BJ (cell line): ENCODE measurements at regions of chr1 and their contacts with region 1.

Region 1: DNA sequence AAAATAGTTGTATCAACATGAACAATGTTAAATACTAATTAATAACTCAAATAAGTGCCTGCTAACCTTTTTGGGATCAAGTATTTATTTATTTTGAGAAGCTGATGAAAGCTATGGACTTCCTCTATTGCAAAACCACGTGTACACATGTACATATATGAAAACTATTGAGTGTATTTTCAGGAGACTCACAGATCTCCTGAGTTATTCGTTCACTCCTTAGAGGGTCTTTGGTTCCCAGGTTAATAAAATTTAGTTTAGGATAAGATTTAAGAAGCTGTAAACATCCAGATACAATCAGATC is 130.5 kb downstream of the DISC1 start:
- DNase-seq: no peak
- H3K4me3 ChIP-seq: no peak overlapping the region
- H3K27me3 ChIP-seq: no peaks in the 10 kb centered on the region
- CTCF ChIP-seq: no peak

Region 2: DNA sequence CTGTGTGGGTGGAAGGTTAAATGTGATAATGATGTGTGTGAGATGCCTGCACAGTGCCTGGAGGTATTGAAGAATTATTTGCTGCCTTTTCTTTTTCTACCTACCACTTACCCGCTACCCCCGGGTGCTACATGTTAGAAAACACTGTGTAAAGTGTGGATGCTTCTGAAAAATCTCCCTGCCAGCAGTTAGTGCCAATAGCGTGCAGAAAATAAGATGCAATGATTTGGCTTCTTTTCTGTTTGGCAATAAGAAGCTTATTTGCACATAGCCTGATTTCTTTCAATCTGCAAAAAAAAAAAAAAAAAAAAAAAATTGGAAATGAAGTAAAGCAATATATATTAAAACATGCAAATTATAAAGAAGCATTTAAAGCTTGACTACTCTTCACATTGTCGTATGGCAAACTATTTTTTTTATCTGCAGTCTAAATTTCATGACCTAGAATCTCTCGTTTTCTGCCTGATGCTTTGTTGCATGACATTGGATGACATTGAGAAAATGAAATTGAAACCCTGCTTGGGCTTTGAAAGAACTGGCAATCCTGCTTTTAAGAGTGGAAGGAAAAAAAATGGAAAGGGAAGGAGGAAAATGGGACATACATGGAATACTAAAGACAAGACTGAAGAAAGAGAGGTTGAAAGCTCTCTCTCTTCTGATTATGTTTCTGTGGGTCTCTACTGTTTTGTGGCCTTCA is 40.9 kb before region 1 on chr1:
- CTCF ChIA-PET with region 1: no interaction called
- POLR2A ChIA-PET with region 1: no interaction called
- DNase-seq: no peak
- H3K4me3 ChIP-seq: no peak overlapping the region
- H3K27me3 ChIP-seq: no peaks in the 10 kb centered on the region
- CTCF ChIP-seq: no peak

Region 3: DNA sequence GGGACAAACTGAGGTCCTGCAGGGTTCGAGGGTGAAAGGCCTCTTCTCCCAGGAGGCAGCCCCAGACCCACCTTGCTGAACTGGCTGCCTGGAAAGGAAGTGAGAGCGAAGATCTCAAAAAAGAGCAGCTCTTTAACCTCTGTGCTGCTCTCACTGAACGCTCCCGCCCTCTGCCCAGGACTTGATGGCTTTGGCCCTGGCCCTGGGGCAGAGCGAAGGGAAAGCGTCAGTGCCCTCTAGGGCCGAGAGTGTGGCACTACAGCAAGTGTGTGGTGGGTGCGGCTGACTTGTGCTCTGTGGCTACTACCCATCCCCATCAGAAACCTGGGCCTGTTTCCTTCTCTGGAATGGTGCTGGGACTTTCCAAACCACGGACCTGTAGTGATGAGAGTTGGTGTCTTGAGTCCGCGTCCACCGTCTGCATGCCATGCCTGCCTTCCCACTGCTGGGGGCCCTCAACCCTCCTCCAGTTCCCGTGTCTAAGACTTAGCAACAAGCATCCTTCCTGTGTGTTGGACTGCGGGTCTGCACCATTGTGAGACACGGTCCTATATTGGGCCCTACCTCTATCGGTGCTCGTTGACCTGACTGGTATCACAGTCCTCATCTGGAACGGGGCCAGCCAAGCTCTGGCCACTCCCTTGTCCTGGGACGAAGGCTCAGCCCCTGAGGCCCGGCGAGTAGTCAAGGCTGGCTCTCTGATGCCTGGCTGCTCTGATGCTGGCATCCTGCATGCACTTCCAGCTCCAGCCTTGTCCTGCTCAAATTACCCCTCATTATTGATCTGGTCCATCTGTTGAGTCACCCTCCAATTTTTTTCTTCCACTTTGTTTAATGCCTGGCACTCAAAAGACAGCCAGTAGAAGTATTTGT is 49.8 kb after region 1 on chr1:
- CTCF ChIA-PET with region 1: interaction called, 21 read pairs
- POLR2A ChIA-PET with region 1: no interaction called
- DNase-seq: no peak
- H3K4me3 ChIP-seq: no peak overlapping the region
- H3K27me3 ChIP-seq: no peaks in the 10 kb centered on the region
- CTCF ChIP-seq: peak; percentile 37